ENCODE measurements at regions of chr5 and their contacts with region 1.

Region 1: GRCh38 chr5:145797336-145797735 is 37.8 kb downstream of the PRELID2 start:
- DNase-seq: no peak
- ATAC-seq: no peak
- H3K4me3 ChIP-seq: no peak overlapping the region
- H3K4me3 Mint-ChIP-seq: no peak overlapping the region
- H3K27ac ChIP-seq: no peak overlapping the region
- H3K27ac Mint-ChIP-seq: no peak overlapping the region
- H3K4me1 ChIP-seq: no peaks in the 10 kb centered on the region
- H3K4me1 Mint-ChIP-seq: no peaks in the 10 kb centered on the region
- H3K27me3 ChIP-seq: no peaks in the 10 kb centered on the region
- H3K27me3 Mint-ChIP-seq: no peaks in the 10 kb centered on the region

Region 2: GRCh38 chr5:145855763-145856267 is 58.5 kb after region 1 on chr5:
- CTCF ChIA-PET with region 1: no interaction called
- POLR2A ChIA-PET with region 1: interaction called in 1 of 2 experiments, 11 read pairs
- DNase-seq: no peak
- ATAC-seq: no peak
- H3K4me3 ChIP-seq: no peak overlapping the region
- H3K4me3 Mint-ChIP-seq: peak overlapping the region in 1 of 3 donors; percentile 35
- H3K27ac ChIP-seq: no peak overlapping the region
- H3K27ac Mint-ChIP-seq: no peak overlapping the region
- H3K4me1 ChIP-seq: peaks cover 0 to 6% of the 10 kb centered on the region in 2 experiments
- H3K4me1 Mint-ChIP-seq: peaks cover 0 to 4% (median 4%) of the 10 kb centered on the region in 3 donors
- H3K27me3 ChIP-seq: peaks cover 0 to 8% of the 10 kb centered on the region in 2 experiments
- H3K27me3 Mint-ChIP-seq: peaks cover 12 to 16% of the 10 kb centered on the region in 2 donors

Measured in T-cell (primary cell).